ENCODE measurements at regions of chr7 and their contacts with region 1.

Region 1: DNA sequence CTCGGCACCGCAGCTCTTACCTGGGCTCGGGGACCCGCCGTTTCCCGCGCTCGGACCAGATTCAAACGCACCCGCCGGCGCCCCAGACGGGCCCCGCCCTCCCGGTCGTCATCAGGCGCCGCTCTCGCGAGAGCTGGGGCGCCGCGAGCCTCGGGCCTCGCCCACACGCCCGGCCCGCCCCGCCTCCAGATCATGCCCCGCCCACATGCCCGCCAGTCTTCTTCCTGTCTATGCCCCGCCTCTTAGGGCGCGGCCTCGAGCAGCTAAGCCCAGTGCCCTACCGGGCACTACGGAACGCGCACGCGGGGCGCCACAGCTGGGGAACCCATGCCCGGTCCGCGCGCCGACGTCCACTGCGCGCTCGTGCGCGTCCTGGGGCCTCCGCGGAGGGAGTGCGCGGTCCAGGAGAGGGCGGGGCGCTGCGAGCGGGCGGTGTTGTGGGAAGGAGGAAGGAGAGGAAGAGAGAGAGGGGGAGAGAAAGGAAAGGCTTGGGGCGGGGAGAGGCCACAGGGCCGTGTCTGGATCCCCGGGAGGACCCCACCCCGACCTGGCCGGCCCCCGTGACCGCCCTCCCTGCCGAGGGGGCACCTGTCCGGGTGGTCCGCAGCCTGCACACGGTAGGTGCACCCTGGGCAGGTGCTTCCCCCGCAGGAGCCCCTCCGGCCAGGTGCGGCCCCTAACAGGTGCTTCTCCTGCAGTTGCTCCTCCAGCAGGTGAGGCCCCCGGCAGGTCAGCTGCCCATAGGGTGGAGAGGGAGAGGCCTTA is at the start of gene NCAPG2:
- DNase-seq: peak; percentile 99 to 100 (median 99)
- H3K4me3 ChIP-seq: peak within 1 kb of the TSS; percentile 87 to 96 (median 95)
- H3K4me3 Mint-ChIP-seq: peak within 1 kb of the TSS; percentile 74 to 84
- H3K27ac ChIP-seq: peak within 1 kb of the TSS; percentile 88 to 95
- H3K27ac Mint-ChIP-seq: peak within 1 kb of the TSS; percentile 74 to 92 (median 90)
- H3K4me1 ChIP-seq: peaks cover 35 to 50% of the 10 kb centered on the region in 2 donors
- H3K4me1 Mint-ChIP-seq: peaks cover 35% of the 10 kb centered on the region
- H3K27me3 ChIP-seq: no peaks in the 10 kb centered on the region
- H3K27me3 Mint-ChIP-seq: no peaks in the 10 kb centered on the region
- CTCF ChIP-seq: peak; percentile 23
- polyA plus RNA-seq, gene NCAPG2: 1.1 to 3.1 (median 1.7) TPM

Region 2: GRCh38 chr7:158473221-158473620 is 231.7 kb before region 1 on chr7:
- intact Hi-C with region 1: no loop called
- DNase-seq: no peak
- H3K4me3 ChIP-seq: peak overlapping the region in 1 of 3 experiments; percentile 39
- H3K4me3 Mint-ChIP-seq: peak overlapping the region; percentile 45 to 79
- H3K27ac ChIP-seq: no peak overlapping the region
- H3K27ac Mint-ChIP-seq: peak overlapping the region in 2 of 7 donors; percentile 45 to 80
- H3K4me1 ChIP-seq: peaks cover 38 to 44% of the 10 kb centered on the region in 2 donors
- H3K4me1 Mint-ChIP-seq: peaks cover 39% of the 10 kb centered on the region
- H3K27me3 ChIP-seq: peaks cover 0 to under 1% of the 10 kb centered on the region in 2 donors
- H3K27me3 Mint-ChIP-seq: peaks cover 2 to 25% (median 20%) of the 10 kb centered on the region in 3 donors
- CTCF ChIP-seq: no peak

Region 3: DNA sequence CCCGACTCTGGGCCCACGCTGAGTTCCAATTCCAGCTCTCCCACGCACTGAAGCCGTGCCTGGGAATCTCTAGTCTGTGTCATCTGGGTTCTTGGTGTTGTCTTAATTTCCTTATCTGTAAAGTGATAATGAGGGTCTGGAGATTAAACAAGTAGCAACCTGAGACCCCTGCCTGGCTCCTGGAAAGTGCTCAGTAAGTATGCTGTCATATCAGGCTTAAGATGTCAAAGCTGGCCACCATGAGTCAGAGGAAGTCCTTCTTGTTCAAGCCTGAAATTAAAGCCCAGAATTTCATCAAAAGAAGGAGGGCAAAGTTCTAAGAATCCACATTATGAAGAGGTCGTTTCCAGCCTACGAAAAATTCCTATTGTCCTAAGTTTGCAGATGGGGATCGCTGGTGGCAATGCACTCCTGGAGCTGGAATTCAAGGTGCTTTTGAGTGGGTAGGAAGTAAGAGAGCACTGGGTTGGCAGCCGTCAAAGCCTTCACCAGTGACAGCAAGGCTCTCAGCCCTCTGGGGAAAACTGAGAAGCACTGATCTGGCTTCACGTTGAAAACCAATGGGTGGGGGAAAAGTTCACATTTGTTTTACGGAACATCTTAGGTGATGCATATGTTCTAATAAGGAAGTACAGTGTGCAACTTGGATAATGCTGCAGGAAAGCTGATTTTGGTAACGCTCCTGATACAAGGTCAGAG is 50.0 kb after region 1 on chr7:
- intact Hi-C with region 1: no loop called
- DNase-seq: no peak
- H3K4me3 ChIP-seq: no peak overlapping the region
- H3K4me3 Mint-ChIP-seq: no peak overlapping the region
- H3K27ac ChIP-seq: peak overlapping the region in 1 of 2 donors; percentile 46
- H3K27ac Mint-ChIP-seq: peak overlapping the region in 3 of 7 donors; percentile 22 to 27 (median 26)
- H3K4me1 ChIP-seq: no peaks in the 10 kb centered on the region
- H3K4me1 Mint-ChIP-seq: no peaks in the 10 kb centered on the region
- H3K27me3 ChIP-seq: no peaks in the 10 kb centered on the region
- H3K27me3 Mint-ChIP-seq: no peaks in the 10 kb centered on the region
- CTCF ChIP-seq: no peak

Region 4: GRCh38 chr7:158829342-158830210 is 124.7 kb after region 1 on chr7 and contains the start of gene ESYT2:
- intact Hi-C with region 1: loop called in 1 of 2 experiments (anchors 10 kb)
- DNase-seq: peak; percentile 98 to 99 (median 98)
- H3K4me3 ChIP-seq: peak within 1 kb of the TSS; percentile 75 to 97 (median 97)
- H3K4me3 Mint-ChIP-seq: peak within 1 kb of the TSS; percentile 90 to 98
- H3K27ac ChIP-seq: peak within 1 kb of the TSS; percentile 96 to 99
- H3K27ac Mint-ChIP-seq: peak within 1 kb of the TSS; percentile 93 to 97 (median 95)
- H3K4me1 ChIP-seq: peaks cover 22 to 23% of the 10 kb centered on the region in 2 donors
- H3K4me1 Mint-ChIP-seq: peaks cover 26% of the 10 kb centered on the region
- H3K27me3 ChIP-seq: no peaks in the 10 kb centered on the region
- H3K27me3 Mint-ChIP-seq: no peaks in the 10 kb centered on the region
- CTCF ChIP-seq: no peak
- polyA plus RNA-seq, gene ESYT2: 14.0 to 24.1 (median 22.0) TPM

Measured in CD14-positive monocyte (primary cell).